Posterior vena cava (tissue), 2 donors: ENCODE measurements at regions of chr1 and their contacts with region 1.

Region 1: GRCh38 chr1:31846484-31846883 is 30.7 kb upstream of the SPOCD1 start:
- DNase-seq: no peak

Region 2: GRCh38 chr1:31535561-31535960 is 310.9 kb before region 1 on chr1:
- intact Hi-C with region 1: no loop called
- DNase-seq: no peak

Region 3: GRCh38 chr1:31789259-31790065 is 57.0 kb before region 1 on chr1:
- intact Hi-C with region 1: no loop called
- DNase-seq: peak; percentile 98

Region 4: GRCh38 chr1:31830511-31831086 is 15.9 kb before region 1 on chr1:
- intact Hi-C with region 1: loop called in 1 of 2 experiments (anchors 1 kb)
- DNase-seq: no peak